ENCODE measurements at regions of chr11 and their contacts with region 1.

Region 1: GRCh38 chr11:79388201-79388600 is 52.6 kb downstream of the TENM4 start:
- H3K4me3 Mint-ChIP-seq: no peak overlapping the region
- H3K27ac Mint-ChIP-seq: no peak overlapping the region
- H3K4me1 Mint-ChIP-seq: peaks cover 16% of the 10 kb centered on the region
- H3K27me3 Mint-ChIP-seq: peaks cover 82% of the 10 kb centered on the region

Region 2: DNA sequence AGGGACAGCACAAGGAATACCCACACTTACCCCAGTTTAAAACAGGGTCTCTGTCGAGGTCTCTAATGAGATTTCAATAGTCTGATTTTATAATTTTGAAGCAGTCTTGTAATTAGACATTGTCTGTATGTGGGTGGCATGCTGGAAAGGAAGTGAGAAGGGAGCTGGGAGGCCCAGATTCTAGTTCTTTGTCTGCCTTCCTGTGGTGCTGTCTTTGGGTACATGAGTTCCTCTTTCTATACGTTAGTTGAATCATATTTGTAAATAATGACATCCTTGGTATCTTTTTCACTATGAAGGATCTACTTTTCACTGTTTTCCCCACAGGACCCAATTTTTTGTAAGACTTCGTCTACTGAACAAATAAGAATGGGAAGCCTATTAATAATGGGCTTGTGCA is 94.6 kb after region 1 on chr11:
- intact Hi-C with region 1: loop called (anchors 5 kb)
- H3K4me3 Mint-ChIP-seq: no peak overlapping the region
- H3K27ac Mint-ChIP-seq: peak overlapping the region; percentile 27
- H3K4me1 Mint-ChIP-seq: peaks cover 25% of the 10 kb centered on the region
- H3K27me3 Mint-ChIP-seq: peaks cover 30% of the 10 kb centered on the region

Region 3: GRCh38 chr11:79600711-79601110 is 212.5 kb after region 1 on chr11:
- intact Hi-C with region 1: no loop called
- H3K4me3 Mint-ChIP-seq: no peak overlapping the region
- H3K27ac Mint-ChIP-seq: no peak overlapping the region
- H3K4me1 Mint-ChIP-seq: no peaks in the 10 kb centered on the region
- H3K27me3 Mint-ChIP-seq: no peaks in the 10 kb centered on the region